ENCODE measurements at regions of chr10 and their contacts with region 1.

Region 1: DNA sequence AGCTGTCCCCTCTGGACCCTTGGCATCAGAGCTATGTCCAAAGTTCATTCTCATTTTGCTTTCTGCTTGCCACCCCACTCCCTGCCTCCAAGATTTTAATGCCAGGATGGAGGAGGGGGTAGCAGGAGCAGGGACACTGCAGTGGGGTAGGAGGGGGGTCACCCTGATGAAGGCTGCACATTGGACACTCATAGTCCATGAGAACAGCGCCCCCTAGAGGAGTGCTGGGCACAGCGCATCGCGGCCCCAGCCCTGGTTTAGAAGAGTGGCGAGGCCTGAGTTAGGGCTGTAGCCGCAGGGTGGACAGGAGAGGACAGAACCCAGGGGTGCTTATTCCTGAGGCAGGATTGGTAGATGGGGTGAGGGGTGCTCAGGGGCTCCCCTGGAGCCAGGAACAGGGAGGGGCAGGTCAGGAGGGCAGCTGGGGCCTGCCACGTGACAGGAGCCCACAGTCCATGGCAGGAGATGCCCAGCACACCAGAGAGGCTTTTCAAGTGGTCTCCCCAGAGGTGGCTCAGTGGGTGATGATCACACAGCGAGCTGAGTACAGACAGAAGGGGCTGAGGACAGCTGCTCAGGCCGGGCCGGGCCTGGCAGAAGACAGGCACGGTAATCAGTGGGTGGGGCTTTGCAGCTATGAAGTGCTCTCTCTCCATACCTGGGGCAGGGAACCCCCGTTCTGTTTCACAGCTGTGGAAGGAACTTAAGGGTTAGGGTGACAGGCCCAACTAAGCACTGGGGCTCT is 71.4 kb downstream of the NEURL1 start:
- H3K4me3 ChIP-seq: no peak overlapping the region
- H3K27ac ChIP-seq: no peak overlapping the region
- H3K4me1 ChIP-seq: no peaks in the 10 kb centered on the region
- CTCF ChIP-seq: peak; percentile 80

Region 2: DNA sequence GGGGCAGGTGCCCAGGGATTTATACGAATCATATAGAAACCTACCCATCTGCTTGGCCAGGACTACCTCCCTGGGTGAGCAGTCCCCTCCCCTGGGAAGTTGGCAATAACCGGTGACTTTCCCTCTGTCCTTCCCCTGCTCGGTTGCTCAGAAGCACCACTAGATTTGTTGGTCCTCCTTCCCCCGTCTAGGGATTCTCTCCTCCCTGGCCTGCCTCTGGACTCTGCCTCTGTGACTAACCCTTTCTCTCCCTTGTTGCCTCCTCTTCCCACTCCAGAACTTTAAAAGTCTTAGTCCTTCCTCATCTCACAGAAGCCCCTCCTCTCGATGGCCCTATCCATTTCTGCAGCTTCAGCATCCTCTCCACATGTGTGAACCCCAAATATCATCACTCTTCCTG is 95.7 kb before region 1 on chr10:
- CTCF ChIA-PET with region 1: no interaction called
- POLR2A ChIA-PET with region 1: no interaction called
- H3K4me3 ChIP-seq: no peak overlapping the region
- H3K27ac ChIP-seq: no peak overlapping the region
- H3K4me1 ChIP-seq: no peaks in the 10 kb centered on the region
- CTCF ChIP-seq: no peak

Region 3: DNA sequence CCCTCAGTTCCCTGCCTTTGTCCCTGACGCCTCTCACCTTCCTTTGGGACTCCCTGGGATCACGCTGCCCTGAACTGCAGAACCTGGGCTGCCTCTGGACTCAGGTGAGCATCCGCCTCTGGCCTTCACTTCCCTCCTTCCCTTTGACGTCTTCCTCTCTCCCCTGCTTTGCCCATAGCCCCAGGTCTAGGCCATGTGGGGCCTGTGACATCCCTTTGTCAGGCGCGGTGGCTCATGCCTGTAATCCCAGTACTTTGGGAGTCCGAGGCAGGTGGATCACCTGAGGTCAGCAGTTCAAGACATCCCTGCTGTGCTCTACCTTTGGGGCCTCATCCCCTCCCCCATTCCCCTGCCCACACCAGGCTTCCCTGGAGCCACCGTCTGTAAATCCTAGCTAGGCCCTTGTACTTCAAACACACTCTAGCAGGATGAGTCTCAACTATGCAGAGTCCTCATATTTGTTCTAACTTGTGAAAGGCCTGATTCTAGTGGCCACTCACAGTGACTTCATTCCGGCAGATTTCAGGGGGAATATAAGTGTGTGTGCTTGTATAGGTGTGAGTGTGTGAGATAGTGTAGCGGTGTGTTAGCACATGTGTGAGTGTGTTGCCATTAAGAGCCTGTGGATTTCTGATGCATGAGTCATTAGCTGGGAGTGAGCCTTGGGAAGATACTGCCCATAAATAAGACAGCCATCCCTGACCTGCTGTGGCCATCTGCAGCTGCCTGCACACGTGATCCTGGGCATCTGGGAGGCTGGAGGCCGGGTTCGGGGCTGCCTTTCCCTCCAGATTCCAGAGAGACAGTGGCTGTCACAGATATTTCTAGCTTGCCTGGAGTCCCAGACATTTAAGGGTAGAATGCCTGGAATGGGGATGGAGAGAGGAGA is 73.2 kb before region 1 on chr10:
- CTCF ChIA-PET with region 1: interaction called, 41 read pairs
- POLR2A ChIA-PET with region 1: no interaction called
- H3K4me3 ChIP-seq: no peak overlapping the region
- H3K27ac ChIP-seq: no peak overlapping the region
- H3K4me1 ChIP-seq: no peaks in the 10 kb centered on the region
- CTCF ChIP-seq: no peak

Region 4: GRCh38 chr10:103548581-103549348 is 16.2 kb before region 1 on chr10:
- CTCF ChIA-PET with region 1: interaction called, 21 read pairs
- POLR2A ChIA-PET with region 1: no interaction called
- H3K4me3 ChIP-seq: no peak overlapping the region
- H3K27ac ChIP-seq: no peak overlapping the region
- H3K4me1 ChIP-seq: no peaks in the 10 kb centered on the region
- CTCF ChIP-seq: no peak

Region 5: GRCh38 chr10:103584216-103585010 is 19.5 kb after region 1 on chr10:
- CTCF ChIA-PET with region 1: interaction called, 23 read pairs
- POLR2A ChIA-PET with region 1: no interaction called
- H3K4me3 ChIP-seq: no peak overlapping the region
- H3K27ac ChIP-seq: no peak overlapping the region
- H3K4me1 ChIP-seq: no peaks in the 10 kb centered on the region
- CTCF ChIP-seq: no peak

Region 6: DNA sequence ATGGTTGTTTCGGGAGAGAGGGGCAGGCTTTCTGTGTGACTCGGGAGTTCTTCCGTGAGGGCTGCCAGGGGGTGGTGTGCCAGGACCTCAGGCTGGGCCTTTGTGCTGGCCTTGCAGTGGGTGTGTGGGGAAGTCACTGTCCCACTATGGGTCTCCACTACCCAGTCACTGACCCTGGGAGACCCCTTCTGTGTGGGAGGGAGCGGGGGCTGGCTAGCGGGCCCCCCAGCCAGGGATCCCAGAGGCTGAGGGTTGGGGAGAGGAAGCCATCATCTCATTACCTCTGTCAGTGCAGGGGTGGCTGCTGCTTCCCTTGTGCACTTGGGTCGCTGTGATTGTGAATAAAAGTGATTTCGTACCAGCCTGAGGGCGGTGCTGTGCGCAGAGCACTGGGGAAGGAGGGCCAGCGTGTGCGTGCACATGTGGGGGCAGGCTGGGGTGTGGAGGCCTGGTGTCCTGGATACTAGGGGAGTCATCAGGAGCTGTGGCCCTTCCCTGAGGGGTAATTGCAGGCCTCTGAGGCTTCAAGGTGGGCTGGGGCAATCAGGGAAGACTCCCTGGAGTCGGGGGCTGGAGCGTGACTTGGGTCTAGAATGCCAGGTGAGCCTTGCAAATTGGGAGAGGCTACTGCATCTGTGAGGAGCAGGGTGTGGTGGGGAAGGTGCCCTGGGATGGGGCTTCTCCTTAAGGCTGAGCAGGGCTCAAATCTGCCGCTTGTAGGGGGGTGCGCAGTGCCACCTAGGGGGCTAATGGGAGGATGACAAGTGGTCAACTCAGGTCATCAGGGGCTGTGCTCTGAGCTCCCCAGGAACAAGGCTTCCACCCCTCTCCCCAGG is 27.5 kb after region 1 on chr10:
- CTCF ChIA-PET with region 1: interaction called, 16 read pairs
- POLR2A ChIA-PET with region 1: no interaction called
- H3K4me3 ChIP-seq: no peak overlapping the region
- H3K27ac ChIP-seq: no peak overlapping the region
- H3K4me1 ChIP-seq: no peaks in the 10 kb centered on the region
- CTCF ChIP-seq: peak; percentile 79

Region 7: GRCh38 chr10:103739039-103739764 is 174.3 kb after region 1 on chr10:
- CTCF ChIA-PET with region 1: no interaction called
- POLR2A ChIA-PET with region 1: no interaction called
- H3K4me3 ChIP-seq: no peak overlapping the region
- H3K27ac ChIP-seq: no peak overlapping the region
- H3K4me1 ChIP-seq: no peaks in the 10 kb centered on the region
- CTCF ChIP-seq: no peak

Measured in HEK293 (cell line).